ENCODE measurements at regions of chr19 and their contacts with region 1.

Region 1: GRCh38 chr19:37370880-37371661 is at the start of gene ZNF527:
- DNase-seq: peak; percentile 96 to 98
- ATAC-seq: peak; percentile 92 to 96 (median 93)
- H3K4me3 ChIP-seq: peak within 1 kb of the TSS; percentile 81
- H3K4me3 Mint-ChIP-seq: peak within 1 kb of the TSS; percentile 98
- H3K27ac ChIP-seq: peak within 1 kb of the TSS; percentile 94
- H3K27ac Mint-ChIP-seq: peak within 1 kb of the TSS; percentile 93 to 99
- H3K4me1 ChIP-seq: peaks cover 12% of the 10 kb centered on the region
- H3K4me1 Mint-ChIP-seq: peaks cover 17 to 19% of the 10 kb centered on the region in 2 donors
- H3K27me3 ChIP-seq: no peaks in the 10 kb centered on the region
- H3K27me3 Mint-ChIP-seq: no peaks in the 10 kb centered on the region
- CTCF ChIP-seq: no peak
- total RNA-seq, gene ZNF527: 9.9 to 14.0 (median 13.6) TPM

Region 2: GRCh38 chr19:36528194-36528920 is 842.7 kb before region 1 on chr19 and contains the start of gene ZNF260:
- intact Hi-C with region 1: loop called (anchors 1 kb)
- DNase-seq: peak; percentile 90 to 94
- ATAC-seq: peak; percentile 77 to 92 (median 84)
- H3K4me3 ChIP-seq: peak within 1 kb of the TSS; percentile 76
- H3K4me3 Mint-ChIP-seq: peak within 1 kb of the TSS; percentile 97
- H3K27ac ChIP-seq: peak within 1 kb of the TSS; percentile 93
- H3K27ac Mint-ChIP-seq: peak within 1 kb of the TSS; percentile 94 to 99
- H3K4me1 ChIP-seq: peaks cover 17% of the 10 kb centered on the region
- H3K4me1 Mint-ChIP-seq: peaks cover 27 to 30% of the 10 kb centered on the region in 2 donors
- H3K27me3 ChIP-seq: no peaks in the 10 kb centered on the region
- H3K27me3 Mint-ChIP-seq: no peaks in the 10 kb centered on the region
- CTCF ChIP-seq: no peak
- total RNA-seq, gene ZNF260: 8.0 to 9.4 (median 8.4) TPM

Region 3: GRCh38 chr19:37172368-37173366 is 198.4 kb before region 1 on chr19 and contains the start of gene ZNF585A:
- intact Hi-C with region 1: loop called (anchors 1 kb)
- DNase-seq: peak; percentile 86 to 97
- ATAC-seq: peak; percentile 98 to 99 (median 99)
- H3K4me3 ChIP-seq: peak within 1 kb of the TSS; percentile 71
- H3K4me3 Mint-ChIP-seq: no peak within 1 kb of the TSS
- H3K27ac ChIP-seq: peak within 1 kb of the TSS; percentile 79
- H3K27ac Mint-ChIP-seq: no peak within 1 kb of the TSS
- H3K4me1 ChIP-seq: peaks cover 2% of the 10 kb centered on the region
- H3K4me1 Mint-ChIP-seq: peaks cover 0 to 4% of the 10 kb centered on the region in 2 donors
- H3K27me3 ChIP-seq: no peaks in the 10 kb centered on the region
- H3K27me3 Mint-ChIP-seq: no peaks in the 10 kb centered on the region
- CTCF ChIP-seq: no peak
- total RNA-seq, gene ZNF585A: 8.9 to 12.6 (median 9.9) TPM

Region 4: GRCh38 chr19:37466798-37467607 is 95.9 kb after region 1 on chr19 and contains the start of gene ZNF569:
- intact Hi-C with region 1: loop called (anchors 1 kb)
- DNase-seq: peak; percentile 86 to 96
- ATAC-seq: peak; percentile 64 to 80 (median 67)
- H3K4me3 ChIP-seq: peak within 1 kb of the TSS; percentile 89
- H3K4me3 Mint-ChIP-seq: peak within 1 kb of the TSS; percentile 94
- H3K27ac ChIP-seq: peak within 1 kb of the TSS; percentile 92
- H3K27ac Mint-ChIP-seq: peak within 1 kb of the TSS; percentile 97 to 99
- H3K4me1 ChIP-seq: peaks cover 31% of the 10 kb centered on the region
- H3K4me1 Mint-ChIP-seq: peaks cover 35 to 49% of the 10 kb centered on the region in 2 donors
- H3K27me3 ChIP-seq: no peaks in the 10 kb centered on the region
- H3K27me3 Mint-ChIP-seq: no peaks in the 10 kb centered on the region
- CTCF ChIP-seq: no peak
- total RNA-seq, gene ZNF569: 6.3 to 9.5 (median 8.0) TPM

Region 5: DNA sequence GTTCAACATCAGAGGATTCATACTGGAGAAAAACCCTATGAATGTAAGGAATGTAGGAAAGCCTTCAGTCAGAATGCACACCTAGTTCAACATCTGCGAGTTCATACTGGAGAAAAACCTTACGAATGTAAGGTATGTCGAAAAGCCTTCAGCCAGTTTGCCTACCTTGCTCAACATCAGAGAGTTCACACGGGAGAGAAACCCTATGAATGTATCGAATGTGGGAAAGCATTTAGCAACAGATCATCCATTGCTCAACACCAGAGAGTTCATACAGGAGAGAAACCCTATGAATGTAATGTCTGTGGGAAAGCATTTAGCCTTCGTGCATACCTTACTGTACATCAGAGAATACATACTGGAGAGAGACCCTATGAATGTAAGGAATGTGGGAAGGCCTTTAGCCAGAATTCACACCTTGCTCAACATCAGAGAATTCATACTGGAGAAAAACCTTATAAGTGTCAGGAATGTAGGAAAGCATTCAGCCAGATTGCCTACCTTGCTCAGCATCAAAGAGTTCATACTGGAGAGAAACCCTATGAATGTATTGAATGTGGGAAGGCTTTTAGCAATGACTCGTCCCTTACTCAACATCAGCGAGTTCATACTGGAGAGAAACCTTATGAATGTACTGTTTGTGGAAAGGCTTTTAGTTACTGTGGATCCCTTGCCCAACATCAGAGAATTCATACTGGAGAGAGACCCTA is 113.5 kb after region 1 on chr19:
- intact Hi-C with region 1: no loop called
- DNase-seq: no peak
- ATAC-seq: peak in 1 of 3 donors; percentile 27
- H3K4me3 ChIP-seq: no peak overlapping the region
- H3K4me3 Mint-ChIP-seq: no peak overlapping the region
- H3K27ac ChIP-seq: no peak overlapping the region
- H3K27ac Mint-ChIP-seq: no peak overlapping the region
- H3K4me1 ChIP-seq: no peaks in the 10 kb centered on the region
- H3K4me1 Mint-ChIP-seq: no peaks in the 10 kb centered on the region
- H3K27me3 ChIP-seq: no peaks in the 10 kb centered on the region
- H3K27me3 Mint-ChIP-seq: no peaks in the 10 kb centered on the region
- CTCF ChIP-seq: no peak

Region 6: DNA sequence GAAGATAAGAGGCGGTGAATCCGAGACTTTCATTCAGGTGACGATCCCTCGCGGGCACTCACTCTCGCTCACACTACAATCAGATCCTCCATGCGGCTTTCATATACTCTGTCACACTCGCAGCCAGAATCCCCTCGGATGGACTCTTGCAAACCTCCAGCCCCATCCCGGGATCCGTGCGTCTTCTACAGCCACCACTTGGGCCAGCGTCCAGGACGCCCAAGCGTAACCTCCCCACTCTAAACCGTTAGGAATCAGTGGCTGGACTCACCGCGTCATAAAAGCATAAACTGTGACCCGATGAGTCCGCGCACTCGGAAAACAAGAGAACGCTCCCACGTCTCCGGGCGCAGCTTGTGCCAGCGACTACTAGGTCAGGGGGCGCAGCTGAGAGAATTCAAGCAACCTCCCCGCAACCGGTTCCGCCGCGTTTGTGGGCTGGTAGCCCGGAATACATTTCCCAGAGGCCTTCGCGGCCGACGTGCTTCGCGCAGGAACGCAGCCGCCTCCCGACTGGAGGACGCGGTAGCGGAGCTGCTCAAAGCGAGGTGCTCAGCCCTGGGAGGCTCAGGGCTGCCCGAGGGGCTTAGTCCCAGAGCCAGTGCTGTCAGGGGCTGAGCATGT is 320.9 kb after region 1 on chr19:
- intact Hi-C with region 1: loop called (anchors 10 kb)
- DNase-seq: peak; percentile 66 to 87
- ATAC-seq: peak; percentile 91 to 97 (median 95)
- H3K4me3 ChIP-seq: peak overlapping the region; percentile 70
- H3K4me3 Mint-ChIP-seq: peak overlapping the region; percentile 99
- H3K27ac ChIP-seq: peak overlapping the region; percentile 79
- H3K27ac Mint-ChIP-seq: peak overlapping the region; percentile 93 to 99
- H3K4me1 ChIP-seq: peaks cover 3% of the 10 kb centered on the region
- H3K4me1 Mint-ChIP-seq: peaks cover 9 to 11% of the 10 kb centered on the region in 2 donors
- H3K27me3 ChIP-seq: no peaks in the 10 kb centered on the region
- H3K27me3 Mint-ChIP-seq: no peaks in the 10 kb centered on the region
- CTCF ChIP-seq: no peak

Region 7: DNA sequence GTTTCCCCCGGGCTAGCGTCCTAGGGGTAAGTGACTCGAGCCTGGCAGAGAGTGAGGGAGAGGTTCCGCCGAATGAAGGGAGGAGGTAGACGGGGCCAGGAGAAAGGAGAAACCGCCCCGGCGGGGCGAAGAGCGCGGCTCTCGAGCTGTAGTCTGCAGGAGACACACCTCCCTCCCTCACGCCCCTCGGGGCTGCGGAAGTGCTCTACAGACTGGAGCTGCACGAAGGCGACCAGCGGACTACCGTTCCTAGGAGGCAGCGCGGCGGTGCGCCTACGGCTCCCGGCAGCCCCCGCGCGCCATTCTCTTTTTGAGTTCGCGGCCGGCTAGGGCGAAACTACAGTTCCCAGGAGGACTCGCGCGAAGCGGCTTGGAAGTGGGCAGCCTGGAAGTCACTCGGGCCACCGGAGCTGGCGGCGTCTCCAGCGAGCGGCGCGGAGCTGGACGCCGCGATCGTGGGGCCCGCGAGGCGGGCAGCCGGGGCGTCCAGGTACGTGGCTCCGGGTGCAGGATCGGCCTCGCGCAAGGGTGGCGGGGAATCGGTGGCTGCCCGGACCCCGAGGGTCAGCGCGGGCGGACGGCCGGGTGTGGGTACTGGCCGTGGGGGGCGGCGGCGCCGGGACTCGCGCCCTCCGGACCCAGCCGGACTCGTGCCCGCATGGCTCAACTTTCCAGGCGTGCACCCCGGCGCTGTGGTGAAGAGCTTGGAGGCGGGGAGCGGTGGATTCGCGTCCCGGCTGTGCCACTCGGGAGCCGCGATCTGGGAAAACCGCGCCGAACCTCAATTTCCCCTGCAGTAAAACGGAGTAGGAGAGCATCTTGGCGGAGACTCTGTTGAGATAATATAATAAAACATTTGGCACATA is 536.0 kb after region 1 on chr19 and contains the start of gene SIPA1L3:
- intact Hi-C with region 1: loop called (anchors 2 kb)
- DNase-seq: peak; percentile 85 to 95
- ATAC-seq: peak; percentile 98 to 99 (median 98)
- H3K4me3 ChIP-seq: peak within 1 kb of the TSS; percentile 76
- H3K4me3 Mint-ChIP-seq: peak within 1 kb of the TSS; percentile 93
- H3K27ac ChIP-seq: no peak within 1 kb of the TSS
- H3K27ac Mint-ChIP-seq: peak within 1 kb of the TSS; percentile 18 to 87
- H3K4me1 ChIP-seq: peaks cover 22% of the 10 kb centered on the region
- H3K4me1 Mint-ChIP-seq: peaks cover 19 to 25% of the 10 kb centered on the region in 2 donors
- H3K27me3 ChIP-seq: no peaks in the 10 kb centered on the region
- H3K27me3 Mint-ChIP-seq: no peaks in the 10 kb centered on the region
- CTCF ChIP-seq: no peak
- total RNA-seq, gene SIPA1L3: 34.4 to 35.8 (median 35.4) TPM

Measured in natural killer cell (primary cell).